ENCODE measurements at regions of chr2 and their contacts with region 1.

Region 1: GRCh38 chr2:32010670-32011484 is at the start of gene MEMO1:
- DNase-seq: peak; percentile 98
- H3K4me3 ChIP-seq: peak within 1 kb of the TSS; percentile 100
- H3K27ac ChIP-seq: peak within 1 kb of the TSS; percentile 90
- H3K4me1 ChIP-seq: peaks cover 28% of the 10 kb centered on the region
- CTCF ChIP-seq: 0 out of 2 replicates have a peak, but pooled peaks have one; percentile 10
- total RNA-seq, gene MEMO1: 24.0 and 27.1 TPM in 2 replicates

Region 2: GRCh38 chr2:32039447-32040219 is 28.8 kb after region 1 on chr2 and contains the start of gene DPY30:
- CTCF ChIA-PET with region 1: interaction called, 3 read pairs
- POLR2A ChIA-PET with region 1: interaction called, 24 read pairs
- intact Hi-C with region 1: loop called (anchors 2 kb)
- DNase-seq: peak; percentile 95
- H3K4me3 ChIP-seq: peak within 1 kb of the TSS; percentile 75
- H3K27ac ChIP-seq: peak within 1 kb of the TSS; percentile 52
- H3K4me1 ChIP-seq: peaks cover 11% of the 10 kb centered on the region
- CTCF ChIP-seq: peak; percentile 19; the same call in 1 of the 2 replicates
- total RNA-seq, gene DPY30: 47.9 and 52.4 TPM in 2 replicates

Region 3: GRCh38 chr2:32118055-32118454 is 107.2 kb after region 1 on chr2:
- CTCF ChIA-PET with region 1: no interaction called
- POLR2A ChIA-PET with region 1: no interaction called
- intact Hi-C with region 1: no loop called
- DNase-seq: no peak
- H3K4me3 ChIP-seq: no peak overlapping the region
- H3K27ac ChIP-seq: no peak overlapping the region
- H3K4me1 ChIP-seq: no peaks in the 10 kb centered on the region
- CTCF ChIP-seq: no peak

Region 4: GRCh38 chr2:32168513-32168912 is 157.6 kb after region 1 on chr2:
- CTCF ChIA-PET with region 1: no interaction called
- POLR2A ChIA-PET with region 1: interaction called, 3 read pairs
- intact Hi-C with region 1: loop called (anchors 2 kb)
- DNase-seq: peak; percentile 28
- H3K4me3 ChIP-seq: peak overlapping the region; percentile 8
- H3K27ac ChIP-seq: peak overlapping the region; percentile 4
- H3K4me1 ChIP-seq: peaks cover 30% of the 10 kb centered on the region
- CTCF ChIP-seq: no peak

Region 5: GRCh38 chr2:32402091-32402490 is 391.2 kb after region 1 on chr2:
- CTCF ChIA-PET with region 1: no interaction called
- POLR2A ChIA-PET with region 1: no interaction called
- intact Hi-C with region 1: no loop called
- DNase-seq: no peak
- H3K4me3 ChIP-seq: no peak overlapping the region
- H3K27ac ChIP-seq: no peak overlapping the region
- H3K4me1 ChIP-seq: no peaks in the 10 kb centered on the region
- CTCF ChIP-seq: no peak

Region 6: GRCh38 chr2:33223856-33224255 is 1213.0 kb after region 1 on chr2:
- CTCF ChIA-PET with region 1: no interaction called
- POLR2A ChIA-PET with region 1: no interaction called
- intact Hi-C with region 1: no loop called
- DNase-seq: no peak
- H3K4me3 ChIP-seq: no peak overlapping the region
- H3K27ac ChIP-seq: no peak overlapping the region
- H3K4me1 ChIP-seq: no peaks in the 10 kb centered on the region
- CTCF ChIP-seq: no peak

Measured in OCI-LY7 (cell line).